ENCODE measurements at regions of chr1 and their contacts with region 1.

Region 1: GRCh38 chr1:46340404-46341221 is at the start of gene NSUN4:
- H3K4me3 ChIP-seq: peak within 1 kb of the TSS; percentile 78
- H3K27ac ChIP-seq: peak within 1 kb of the TSS; percentile 81
- H3K4me1 ChIP-seq: no peaks in the 10 kb centered on the region; the same call in none of the 2 replicates
- CTCF ChIP-seq: peak; percentile 99

Region 2: DNA sequence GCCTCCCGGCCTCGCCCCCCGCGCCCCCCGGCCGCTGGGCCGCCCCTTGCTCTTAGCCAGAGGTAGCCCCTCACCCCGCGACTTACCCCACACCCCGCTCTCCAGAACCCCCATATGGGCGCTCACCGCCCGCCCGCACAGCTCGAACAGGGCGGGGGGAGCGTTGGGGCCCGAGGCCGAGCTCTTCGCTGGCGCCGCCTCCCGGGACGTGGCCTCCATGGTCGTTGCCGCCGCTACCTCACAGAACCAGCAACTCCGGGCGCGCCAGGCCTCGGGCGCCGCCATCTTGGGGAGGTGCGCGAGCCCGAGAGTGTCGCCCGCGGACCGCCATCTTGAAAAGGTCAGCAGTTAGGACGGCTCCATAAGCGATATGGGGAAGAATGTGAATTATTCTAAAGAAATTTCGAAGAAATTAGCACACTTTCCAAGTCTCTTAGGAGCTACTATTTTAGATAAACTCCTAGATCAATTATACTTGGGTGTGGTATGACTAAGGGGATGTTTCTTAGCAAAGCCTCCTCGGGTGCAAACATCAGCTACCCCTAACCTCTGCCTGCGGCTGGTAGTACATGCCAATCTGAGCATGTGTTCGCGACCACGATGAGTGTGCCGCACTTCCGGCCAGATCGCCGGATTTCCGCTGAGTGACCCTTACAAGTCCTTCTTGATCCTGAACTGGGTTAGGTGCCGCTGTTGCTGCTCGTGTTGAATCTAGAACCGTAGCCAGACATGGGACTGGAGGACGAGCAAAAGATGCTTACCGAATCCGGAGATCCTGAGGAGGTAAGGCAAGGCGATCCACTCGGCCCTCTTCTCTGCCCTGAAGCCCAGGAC is 37.4 kb before region 1 on chr1 and contains the starts of genes LRRC41 and UQCRH:
- CTCF ChIA-PET with region 1: interaction called, 5 read pairs
- POLR2A ChIA-PET with region 1: interaction called, 24 read pairs
- H3K4me3 ChIP-seq: peak within 1 kb of the TSS; percentile 88
- H3K27ac ChIP-seq: peak within 1 kb of the TSS; percentile 99
- H3K4me1 ChIP-seq: no peaks in the 10 kb centered on the region
- CTCF ChIP-seq: peak; percentile 12; the same call in 1 of the 2 replicates

Region 3: GRCh38 chr1:46362158-46362557 is 21.5 kb after region 1 on chr1:
- CTCF ChIA-PET with region 1: interaction called, 10 read pairs
- POLR2A ChIA-PET with region 1: interaction called, 6 read pairs
- H3K4me3 ChIP-seq: no peak overlapping the region
- H3K27ac ChIP-seq: no peak overlapping the region
- H3K4me1 ChIP-seq: no peaks in the 10 kb centered on the region
- CTCF ChIP-seq: no peak

Measured in HEK293 (cell line).